ENCODE measurements at regions of chr2 and their contacts with region 1.

Region 1: GRCh38 chr2:182077451-182078142 is 91.9 kb downstream of the PPP1R1C start:
- DNase-seq: peak; percentile 50
- H3K4me3 ChIP-seq: no peak overlapping the region
- H3K27ac ChIP-seq: no peak overlapping the region
- H3K4me1 ChIP-seq: no peaks in the 10 kb centered on the region
- H3K27me3 ChIP-seq: no peaks in the 10 kb centered on the region
- CTCF ChIP-seq: peak; percentile 46 to 68 (median 62)
- POLR2A ChIP-seq: no peak

Region 2: DNA sequence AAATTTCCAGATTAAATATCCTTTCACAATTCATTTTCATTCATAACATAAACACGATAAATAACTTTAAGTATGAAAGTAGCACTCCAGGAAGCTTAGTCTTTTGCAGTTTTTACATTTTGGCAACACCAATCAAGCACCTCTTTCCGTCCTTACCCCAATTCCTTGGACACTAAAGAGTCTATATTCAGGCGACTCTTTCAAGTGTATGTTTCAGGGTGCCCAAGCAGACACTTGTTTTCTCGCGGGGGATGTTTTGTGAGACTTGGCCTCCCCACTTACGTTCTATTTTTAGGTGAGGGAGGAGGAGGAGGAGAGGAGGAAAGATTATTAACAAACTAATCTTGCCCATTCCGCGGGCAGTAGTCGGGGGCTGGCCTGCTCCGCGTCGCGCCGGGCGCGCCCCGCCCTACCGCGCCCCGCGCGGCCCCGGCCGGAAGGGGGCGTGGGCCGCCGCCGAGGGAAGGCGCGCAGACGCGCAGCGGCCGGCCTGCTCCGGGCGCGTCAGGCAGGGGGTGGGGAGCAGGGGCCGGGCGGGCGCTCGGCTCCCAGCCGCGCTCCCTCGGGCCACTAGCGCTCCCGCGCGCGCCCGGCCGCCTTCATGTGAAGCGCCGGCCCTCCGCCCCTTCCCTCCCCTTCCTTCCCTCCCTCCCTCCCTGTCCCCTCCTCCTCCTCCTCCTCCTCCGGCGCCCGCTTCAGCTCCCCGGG is 186.2 kb before region 1 on chr2 and contains the start of gene ITPRID2:
- intact Hi-C with region 1: loop called (anchors 5 kb)
- DNase-seq: peak; percentile 86
- H3K4me3 ChIP-seq: peak within 1 kb of the TSS; percentile 86 to 91
- H3K27ac ChIP-seq: peak within 1 kb of the TSS; percentile 97 to 98
- H3K4me1 ChIP-seq: no peaks in the 10 kb centered on the region
- H3K27me3 ChIP-seq: no peaks in the 10 kb centered on the region
- CTCF ChIP-seq: peak in 1 of 4 experiments; percentile 50
- POLR2A ChIP-seq: no peak
- total RNA-seq, gene ITPRID2: 78.9 to 159 TPM

Region 3: DNA sequence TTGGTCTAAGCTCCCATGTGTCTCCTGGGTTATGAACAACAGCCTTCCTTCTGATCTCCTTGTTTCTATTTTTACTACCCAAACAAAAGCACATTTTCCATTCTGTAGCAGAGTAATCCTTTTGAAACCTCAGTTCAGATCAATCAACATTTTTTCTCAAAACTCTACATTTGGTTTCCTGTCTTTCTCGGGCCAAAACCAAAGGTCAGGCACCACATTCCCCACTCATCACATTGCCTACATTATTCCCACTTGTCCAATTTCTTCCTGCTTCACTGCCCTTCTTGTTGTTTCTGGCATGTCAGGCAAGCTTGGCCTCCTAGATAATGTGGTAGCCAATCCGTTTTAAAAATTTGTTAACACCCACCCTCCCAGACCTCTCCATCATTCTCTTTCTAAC is 104.8 kb after region 1 on chr2:
- intact Hi-C with region 1: no loop called
- DNase-seq: no peak
- H3K4me3 ChIP-seq: no peak overlapping the region
- H3K27ac ChIP-seq: no peak overlapping the region
- H3K4me1 ChIP-seq: no peaks in the 10 kb centered on the region
- H3K27me3 ChIP-seq: no peaks in the 10 kb centered on the region
- CTCF ChIP-seq: no peak
- POLR2A ChIP-seq: no peak